ENCODE measurements at regions of chr3 and their contacts with region 1.

Region 1: DNA sequence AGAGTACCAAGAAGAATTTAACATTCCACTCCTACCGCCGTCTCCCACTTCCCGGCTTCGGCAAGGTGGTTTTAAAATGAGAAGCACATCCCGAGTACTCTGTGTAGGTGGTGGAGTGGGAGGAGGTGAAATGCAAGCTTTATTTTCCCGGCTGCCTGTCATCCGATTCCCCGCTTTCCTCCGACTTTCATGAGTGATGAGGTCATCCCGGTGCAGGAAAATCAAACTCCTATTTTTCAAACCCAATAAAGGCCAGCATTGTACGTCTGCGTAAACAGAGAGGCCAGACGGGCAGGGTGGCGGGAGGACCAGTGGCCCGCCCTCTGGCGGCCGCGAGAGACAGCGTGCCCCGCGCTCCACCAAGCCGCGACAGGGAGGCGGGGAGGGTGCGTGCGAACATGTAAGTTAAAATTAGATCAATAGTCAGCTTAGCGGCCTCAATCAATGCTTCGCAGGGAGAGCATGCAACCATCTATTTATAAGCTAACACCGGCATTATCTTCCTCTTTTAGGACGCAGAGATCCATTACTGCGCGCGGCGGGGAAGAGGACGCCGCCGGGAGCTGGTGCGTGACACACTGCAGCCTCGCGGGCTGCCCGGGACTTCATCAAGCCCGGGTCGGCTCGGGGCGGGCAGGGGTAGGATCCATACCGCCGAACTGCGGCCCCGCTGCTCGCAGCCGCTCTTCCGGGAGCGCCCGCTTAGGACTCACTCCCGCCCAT is 163.3 kb downstream of the CD47 start:
- DNase-seq: peak; percentile 36 to 70 (median 56)
- H3K4me3 ChIP-seq: peak overlapping the region; percentile 60
- H3K4me3 Mint-ChIP-seq: peak overlapping the region; percentile 80 to 91 (median 88)
- H3K27ac ChIP-seq: no peak overlapping the region
- H3K27ac Mint-ChIP-seq: peak overlapping the region in 5 of 8 donors; percentile 30 to 84 (median 58)
- H3K4me1 ChIP-seq: peaks cover 8% of the 10 kb centered on the region
- H3K4me1 Mint-ChIP-seq: peaks cover 13 to 16% (median 14%) of the 10 kb centered on the region in 3 donors
- H3K27me3 ChIP-seq: no peaks in the 10 kb centered on the region
- H3K27me3 Mint-ChIP-seq: peaks cover 5 to 20% of the 10 kb centered on the region in 2 donors

Region 2: GRCh38 chr3:107235928-107236315 is 691.6 kb before region 1 on chr3:
- CTCF ChIA-PET with region 1: interaction called, 10 read pairs
- POLR2A ChIA-PET with region 1: no interaction called
- DNase-seq: peak in 4 of 5 donors; percentile 28 to 64 (median 58)
- H3K4me3 ChIP-seq: no peak overlapping the region
- H3K4me3 Mint-ChIP-seq: peak overlapping the region in 6 of 7 donors; percentile 15 to 58 (median 40)
- H3K27ac ChIP-seq: no peak overlapping the region
- H3K27ac Mint-ChIP-seq: no peak overlapping the region
- H3K4me1 ChIP-seq: peaks cover 7% of the 10 kb centered on the region
- H3K4me1 Mint-ChIP-seq: peaks cover 9 to 21% (median 17%) of the 10 kb centered on the region in 3 donors
- H3K27me3 ChIP-seq: no peaks in the 10 kb centered on the region
- H3K27me3 Mint-ChIP-seq: peaks cover 0 to 1% of the 10 kb centered on the region in 2 donors

Region 3: GRCh38 chr3:107676469-107677309 is 250.8 kb before region 1 on chr3:
- CTCF ChIA-PET with region 1: interaction called, 17 read pairs
- POLR2A ChIA-PET with region 1: no interaction called
- DNase-seq: peak in 2 of 5 donors; percentile 15 to 35
- H3K4me3 ChIP-seq: no peak overlapping the region
- H3K4me3 Mint-ChIP-seq: no peak overlapping the region
- H3K27ac ChIP-seq: no peak overlapping the region
- H3K27ac Mint-ChIP-seq: peak overlapping the region in 1 of 8 donors; percentile 82
- H3K4me1 ChIP-seq: no peaks in the 10 kb centered on the region
- H3K4me1 Mint-ChIP-seq: peaks cover 23 to 51% (median 39%) of the 10 kb centered on the region in 3 donors
- H3K27me3 ChIP-seq: no peaks in the 10 kb centered on the region
- H3K27me3 Mint-ChIP-seq: no peaks in the 10 kb centered on the region

Region 4: GRCh38 chr3:107938143-107938542 is 10.6 kb after region 1 on chr3:
- CTCF ChIA-PET with region 1: interaction called, 28 read pairs
- POLR2A ChIA-PET with region 1: no interaction called
- DNase-seq: no peak
- H3K4me3 ChIP-seq: no peak overlapping the region
- H3K4me3 Mint-ChIP-seq: no peak overlapping the region
- H3K27ac ChIP-seq: no peak overlapping the region
- H3K27ac Mint-ChIP-seq: peak overlapping the region in 1 of 8 donors; percentile 52
- H3K4me1 ChIP-seq: peaks cover 10% of the 10 kb centered on the region
- H3K4me1 Mint-ChIP-seq: peaks cover 14 to 16% (median 15%) of the 10 kb centered on the region in 3 donors
- H3K27me3 ChIP-seq: no peaks in the 10 kb centered on the region
- H3K27me3 Mint-ChIP-seq: peaks cover 4 to 17% of the 10 kb centered on the region in 2 donors

Region 5: GRCh38 chr3:107976202-107976800 is 48.8 kb after region 1 on chr3:
- CTCF ChIA-PET with region 1: interaction called, 12 read pairs
- POLR2A ChIA-PET with region 1: no interaction called
- DNase-seq: no peak
- H3K4me3 ChIP-seq: peak overlapping the region; percentile 19
- H3K4me3 Mint-ChIP-seq: peak overlapping the region in 6 of 7 donors; percentile 60 to 87 (median 70)
- H3K27ac ChIP-seq: no peak overlapping the region
- H3K27ac Mint-ChIP-seq: peak overlapping the region; percentile 30 to 97 (median 84)
- H3K4me1 ChIP-seq: peaks cover 50% of the 10 kb centered on the region
- H3K4me1 Mint-ChIP-seq: peaks cover 55 to 65% (median 58%) of the 10 kb centered on the region in 3 donors
- H3K27me3 ChIP-seq: no peaks in the 10 kb centered on the region
- H3K27me3 Mint-ChIP-seq: no peaks in the 10 kb centered on the region

Region 6: GRCh38 chr3:108406063-108406660 is 478.6 kb after region 1 on chr3:
- CTCF ChIA-PET with region 1: interaction called, 10 read pairs
- POLR2A ChIA-PET with region 1: no interaction called
- DNase-seq: no peak
- H3K4me3 ChIP-seq: no peak overlapping the region
- H3K4me3 Mint-ChIP-seq: no peak overlapping the region
- H3K27ac ChIP-seq: no peak overlapping the region
- H3K27ac Mint-ChIP-seq: no peak overlapping the region
- H3K4me1 ChIP-seq: no peaks in the 10 kb centered on the region
- H3K4me1 Mint-ChIP-seq: peaks cover 0 to 6% (median 5%) of the 10 kb centered on the region in 3 donors
- H3K27me3 ChIP-seq: no peaks in the 10 kb centered on the region
- H3K27me3 Mint-ChIP-seq: no peaks in the 10 kb centered on the region

Measured in CD8-positive, alpha-beta memory T cell (primary cell).